B cell (primary cell): ENCODE measurements at regions of chr11 and their contacts with region 1.

Region 1: GRCh38 chr11:6612213-6613041 is at the start of gene TAF10:
- DNase-seq: peak; percentile 96
- ATAC-seq: peak; percentile 80
- H3K4me3 ChIP-seq: peak within 1 kb of the TSS; percentile 79 to 95 (median 85)
- H3K4me3 Mint-ChIP-seq: peak within 1 kb of the TSS; percentile 95
- H3K27ac ChIP-seq: peak within 1 kb of the TSS; percentile 99 to 100
- H3K27ac Mint-ChIP-seq: peak within 1 kb of the TSS; percentile 96
- H3K4me1 ChIP-seq: peaks cover 23 to 32% of the 10 kb centered on the region in 2 donors
- H3K4me1 Mint-ChIP-seq: peaks cover 37% of the 10 kb centered on the region
- H3K27me3 ChIP-seq: no peaks in the 10 kb centered on the region
- H3K27me3 Mint-ChIP-seq: no peaks in the 10 kb centered on the region
- CTCF ChIP-seq: peak; percentile 41
- total RNA-seq, gene TAF10: 92.2 and 114 TPM in 2 replicates

Region 2: DNA sequence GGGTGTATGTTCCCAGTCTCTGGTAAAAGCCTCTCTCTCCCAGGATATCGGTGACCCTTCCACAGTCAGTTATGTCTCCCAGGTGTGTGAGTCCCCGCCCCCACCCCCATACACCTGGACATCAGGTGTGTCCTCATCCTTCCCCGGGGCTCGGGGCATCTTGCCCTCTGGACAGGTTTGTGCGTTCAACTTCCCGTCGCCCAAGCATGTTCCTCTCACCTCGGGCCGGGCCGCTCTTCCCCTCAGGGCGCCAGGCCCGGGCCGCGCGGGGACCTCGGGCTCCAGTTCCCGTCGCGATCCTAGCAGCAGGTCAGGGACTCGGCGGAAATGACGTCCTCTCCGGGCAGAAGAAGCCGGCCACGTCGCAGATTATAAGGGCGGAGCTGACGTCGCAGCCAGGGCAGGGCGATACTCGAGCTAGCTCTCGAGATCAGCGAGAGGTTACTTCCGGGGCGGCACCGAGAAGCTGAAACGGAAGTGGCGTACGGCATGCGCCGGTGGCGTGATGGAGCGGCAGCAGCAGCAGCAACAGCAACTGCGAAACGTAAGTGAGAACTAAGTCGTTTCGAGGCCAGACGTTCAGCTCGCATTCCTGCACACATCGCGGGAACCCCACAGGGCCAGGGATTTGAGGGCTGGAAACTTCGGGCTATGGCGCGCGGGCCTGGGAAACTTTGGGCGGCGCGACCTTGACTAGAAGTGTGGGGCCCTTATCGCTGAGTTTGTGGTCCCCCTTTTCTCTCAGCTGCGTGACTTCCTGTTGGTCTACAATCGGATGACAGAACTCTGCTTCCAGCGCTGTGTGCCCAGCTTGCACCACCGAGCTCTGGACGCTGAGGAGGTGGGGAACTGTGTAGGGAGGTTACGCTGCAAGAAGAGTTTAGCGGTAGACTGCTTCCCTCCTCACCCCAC is 131.2 kb before region 1 on chr11 and contains the starts of genes ARFIP2 and TIMM10B:
- CTCF ChIA-PET with region 1: no interaction called
- POLR2A ChIA-PET with region 1: interaction called, 6 read pairs
- intact Hi-C with region 1: loop called (anchors 1 kb)
- DNase-seq: peak; percentile 98
- ATAC-seq: peak; percentile 96
- H3K4me3 ChIP-seq: peak within 1 kb of the TSS; percentile 26 to 92 (median 83)
- H3K4me3 Mint-ChIP-seq: peak within 1 kb of the TSS; percentile 97
- H3K27ac ChIP-seq: peak within 1 kb of the TSS; percentile 90 to 96
- H3K27ac Mint-ChIP-seq: peak within 1 kb of the TSS; percentile 97
- H3K4me1 ChIP-seq: peaks cover 20 to 27% of the 10 kb centered on the region in 2 donors
- H3K4me1 Mint-ChIP-seq: peaks cover 39% of the 10 kb centered on the region
- H3K27me3 ChIP-seq: no peaks in the 10 kb centered on the region
- H3K27me3 Mint-ChIP-seq: no peaks in the 10 kb centered on the region
- CTCF ChIP-seq: no peak
- total RNA-seq, gene ARFIP2: 46.8 and 47.5 TPM in 2 replicates
- total RNA-seq, gene TIMM10B: 62.1 and 63.7 TPM in 2 replicates

Region 3: DNA sequence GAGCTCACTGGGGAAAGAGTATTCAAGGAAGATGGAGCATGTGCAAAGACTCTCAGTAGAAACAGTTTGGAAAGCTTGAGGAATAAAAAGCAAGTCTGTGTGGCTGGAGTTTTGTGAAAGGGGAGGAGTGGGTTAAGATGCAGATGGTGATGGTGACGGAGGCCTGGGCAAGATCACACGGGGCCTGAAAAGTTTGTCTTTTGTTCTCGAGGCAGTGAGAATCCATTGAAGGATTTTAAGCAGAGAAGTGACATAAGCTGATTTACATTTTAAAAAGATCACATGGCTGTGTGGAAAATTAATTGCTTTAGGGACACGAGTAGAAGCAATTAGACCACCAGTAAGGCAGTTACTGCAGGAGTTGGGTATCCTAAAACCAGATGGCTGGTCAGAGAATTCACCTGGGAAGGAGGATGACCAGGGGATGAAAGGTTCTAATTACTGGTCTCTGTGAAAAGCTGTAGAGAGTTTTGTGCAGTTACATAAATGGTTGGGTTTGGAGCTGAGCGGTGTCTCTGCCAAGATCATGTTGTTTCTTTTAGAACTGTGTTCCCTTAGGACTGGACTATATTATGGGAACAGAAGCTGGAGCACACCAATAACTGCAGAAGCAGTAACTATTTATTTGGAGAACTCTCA is 16.1 kb before region 1 on chr11:
- CTCF ChIA-PET with region 1: no interaction called
- POLR2A ChIA-PET with region 1: interaction called, 12 read pairs
- intact Hi-C with region 1: no loop called
- DNase-seq: no peak
- ATAC-seq: no peak
- H3K4me3 ChIP-seq: no peak overlapping the region
- H3K4me3 Mint-ChIP-seq: no peak overlapping the region
- H3K27ac ChIP-seq: no peak overlapping the region
- H3K27ac Mint-ChIP-seq: no peak overlapping the region
- H3K4me1 ChIP-seq: no peaks in the 10 kb centered on the region
- H3K4me1 Mint-ChIP-seq: peaks cover 19% of the 10 kb centered on the region
- H3K27me3 ChIP-seq: no peaks in the 10 kb centered on the region
- H3K27me3 Mint-ChIP-seq: no peaks in the 10 kb centered on the region
- CTCF ChIP-seq: no peak

Region 4: GRCh38 chr11:6674862-6675261 is 62.4 kb after region 1 on chr11:
- CTCF ChIA-PET with region 1: no interaction called
- POLR2A ChIA-PET with region 1: no interaction called
- intact Hi-C with region 1: no loop called
- DNase-seq: no peak
- ATAC-seq: no peak
- H3K4me3 ChIP-seq: no peak overlapping the region
- H3K4me3 Mint-ChIP-seq: no peak overlapping the region
- H3K27ac ChIP-seq: no peak overlapping the region
- H3K27ac Mint-ChIP-seq: no peak overlapping the region
- H3K4me1 ChIP-seq: no peaks in the 10 kb centered on the region
- H3K4me1 Mint-ChIP-seq: no peaks in the 10 kb centered on the region
- H3K27me3 ChIP-seq: no peaks in the 10 kb centered on the region
- H3K27me3 Mint-ChIP-seq: peaks cover 6% of the 10 kb centered on the region
- CTCF ChIP-seq: no peak